Left ventricle myocardium inferior (tissue), 1 donor: ENCODE measurements at regions of chr2 and their contacts with region 1.

Region 1: GRCh38 chr2:147910990-147911473 is 66.2 kb downstream of the ACVR2A start:
- DNase-seq: no peak
- H3K4me3 ChIP-seq: no peak overlapping the region
- H3K27ac ChIP-seq: no peak overlapping the region
- H3K4me1 ChIP-seq: peaks cover 16% of the 10 kb centered on the region
- H3K27me3 ChIP-seq: no peaks in the 10 kb centered on the region
- CTCF ChIP-seq: peak; percentile 85

Region 2: GRCh38 chr2:146734042-146734820 is 1176.8 kb before region 1 on chr2:
- intact Hi-C with region 1: loop called (anchors 10 kb)
- DNase-seq: no peak
- H3K4me3 ChIP-seq: no peak overlapping the region
- H3K27ac ChIP-seq: no peak overlapping the region
- H3K4me1 ChIP-seq: no peaks in the 10 kb centered on the region
- H3K27me3 ChIP-seq: no peaks in the 10 kb centered on the region
- CTCF ChIP-seq: peak; percentile 58

Region 3: GRCh38 chr2:147082850-147083522 is 828.0 kb before region 1 on chr2:
- intact Hi-C with region 1: loop called (anchors 5 kb)
- DNase-seq: no peak
- H3K4me3 ChIP-seq: no peak overlapping the region
- H3K27ac ChIP-seq: peak overlapping the region; percentile 27
- H3K4me1 ChIP-seq: peaks cover 10% of the 10 kb centered on the region
- H3K27me3 ChIP-seq: no peaks in the 10 kb centered on the region
- CTCF ChIP-seq: peak; percentile 88

Region 4: DNA sequence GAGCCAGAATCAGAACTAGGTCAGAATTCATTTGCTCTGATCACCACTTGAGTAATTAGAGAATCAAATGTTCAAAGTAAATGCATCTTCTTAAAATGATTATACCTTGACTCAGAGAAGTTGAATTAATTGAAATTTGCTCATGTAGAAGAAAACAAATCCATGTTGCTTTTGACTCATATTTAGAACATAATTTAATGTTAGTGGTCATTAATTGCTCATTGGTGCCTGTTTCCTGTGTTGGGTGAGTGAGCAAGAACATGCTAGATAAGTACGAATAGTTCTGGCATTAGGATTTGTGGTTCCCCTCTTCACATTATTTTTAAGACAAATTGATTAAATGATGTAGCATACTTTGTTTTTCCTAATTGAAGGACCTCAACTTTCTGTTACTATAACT is 47.2 kb before region 1 on chr2:
- intact Hi-C with region 1: no loop called
- DNase-seq: no peak
- H3K4me3 ChIP-seq: no peak overlapping the region
- H3K27ac ChIP-seq: no peak overlapping the region
- H3K4me1 ChIP-seq: peaks cover 52% of the 10 kb centered on the region
- H3K27me3 ChIP-seq: no peaks in the 10 kb centered on the region
- CTCF ChIP-seq: no peak